Activated naive CD4-positive, alpha-beta T cell treated with anti-CD3 and anti-CD28 coated beads, Interleukin-2, amount 10 ng/mL, durations not matched to agents 7 days and 5 days (primary cell): ENCODE measurements at regions of chr11 and their contacts with region 1.

Region 1: GRCh38 chr11:111454561-111455192 is 57.5 kb downstream of the BTG4 start:
- DNase-seq: peak; percentile 62
- H3K4me3 Mint-ChIP-seq: no peak overlapping the region
- H3K27ac Mint-ChIP-seq: no peak overlapping the region
- H3K4me1 Mint-ChIP-seq: no peaks in the 10 kb centered on the region
- H3K27me3 Mint-ChIP-seq: peaks cover 4% of the 10 kb centered on the region

Region 2: DNA sequence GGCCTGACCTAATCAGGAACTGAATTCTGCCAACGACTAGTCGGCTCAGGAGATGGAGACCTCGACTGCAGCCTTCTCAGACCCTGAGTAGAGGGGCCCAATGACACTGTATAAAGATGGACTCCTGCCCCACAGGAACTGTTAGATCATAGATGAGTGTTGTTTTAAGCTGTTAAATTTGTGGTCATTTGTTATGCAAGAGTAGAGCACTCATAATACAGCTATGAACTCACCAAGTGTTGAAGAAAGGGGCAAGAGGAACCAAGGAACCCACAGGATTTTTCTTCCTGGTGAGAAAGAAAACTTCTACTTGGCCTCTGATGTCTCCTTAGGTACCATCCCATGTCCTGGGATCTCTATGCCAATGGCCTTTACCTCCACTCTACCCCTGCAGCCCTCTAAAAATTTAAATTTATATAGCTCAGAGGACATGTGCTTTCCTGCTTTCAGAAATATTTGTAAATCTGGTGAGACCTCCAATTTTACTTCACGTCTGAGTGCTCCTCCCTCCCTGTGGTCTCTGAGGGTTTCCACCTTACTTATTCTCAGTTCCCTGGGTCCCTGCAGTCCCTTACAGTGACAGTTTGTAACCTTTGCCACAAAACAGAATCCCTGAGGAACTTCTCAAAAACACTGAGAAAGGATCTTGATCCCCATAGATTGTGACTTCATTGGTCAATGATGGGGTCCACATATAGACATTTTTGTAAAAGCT is 486.2 kb before region 1 on chr11:
- CTCF ChIA-PET with region 1: no interaction called
- DNase-seq: no peak
- H3K4me3 Mint-ChIP-seq: no peak overlapping the region
- H3K27ac Mint-ChIP-seq: no peak overlapping the region
- H3K4me1 Mint-ChIP-seq: no peaks in the 10 kb centered on the region
- H3K27me3 Mint-ChIP-seq: no peaks in the 10 kb centered on the region

Region 3: GRCh38 chr11:111367411-111368284 is 87.0 kb before region 1 on chr11:
- CTCF ChIA-PET with region 1: no interaction called
- DNase-seq: no peak
- H3K4me3 Mint-ChIP-seq: no peak overlapping the region
- H3K27ac Mint-ChIP-seq: no peak overlapping the region
- H3K4me1 Mint-ChIP-seq: peaks cover 6% of the 10 kb centered on the region
- H3K27me3 Mint-ChIP-seq: no peaks in the 10 kb centered on the region

Region 4: GRCh38 chr11:111479666-111480065 is 25.0 kb after region 1 on chr11:
- CTCF ChIA-PET with region 1: no interaction called
- DNase-seq: no peak
- H3K4me3 Mint-ChIP-seq: no peak overlapping the region
- H3K27ac Mint-ChIP-seq: no peak overlapping the region
- H3K4me1 Mint-ChIP-seq: peaks cover 4% of the 10 kb centered on the region
- H3K27me3 Mint-ChIP-seq: peaks cover 22% of the 10 kb centered on the region

Region 5: DNA sequence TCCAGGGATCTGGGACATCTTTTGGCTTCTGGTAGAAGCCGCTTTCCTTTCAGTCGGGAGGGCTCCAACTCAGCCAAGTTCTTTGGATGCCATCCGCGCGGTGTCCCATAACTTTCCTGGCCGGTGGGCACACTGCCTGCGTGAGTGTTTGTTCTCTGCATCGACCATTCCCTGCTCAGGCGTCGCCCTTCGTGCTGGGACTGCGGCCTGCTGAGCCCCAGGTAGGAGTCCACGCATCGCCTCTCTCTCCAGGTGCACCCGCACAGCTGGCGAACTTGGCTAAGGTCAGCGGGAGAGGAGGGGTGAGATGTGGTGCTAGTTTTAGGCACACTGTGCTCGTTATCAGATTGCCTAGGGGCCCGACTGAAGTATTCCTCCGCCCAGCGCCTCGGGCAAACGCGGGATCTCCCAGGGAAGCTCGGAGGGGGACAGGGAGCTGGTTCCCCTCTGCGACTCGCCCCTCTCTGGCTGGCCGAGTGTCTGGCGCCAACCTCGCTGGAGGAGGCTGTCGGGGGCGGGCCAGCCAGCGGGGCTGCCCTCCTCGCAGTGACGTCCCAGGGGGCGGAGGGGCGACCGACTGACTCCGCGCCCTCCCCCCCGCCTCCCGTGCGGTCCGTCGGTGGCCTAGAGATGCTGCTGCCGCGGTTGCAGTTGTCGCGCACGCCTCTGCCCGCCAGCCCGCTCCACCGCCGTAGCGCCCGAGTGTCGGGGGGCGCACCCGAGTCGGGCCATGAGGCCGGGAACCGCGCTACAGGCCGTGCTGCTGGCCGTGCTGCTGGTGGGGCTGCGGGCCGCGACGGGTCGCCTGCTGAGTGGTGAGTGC is 85.6 kb after region 1 on chr11 and contains the start of gene LAYN:
- CTCF ChIA-PET with region 1: interaction called, 15 read pairs
- DNase-seq: peak; percentile 46
- H3K4me3 Mint-ChIP-seq: peak within 1 kb of the TSS; percentile 46
- H3K27ac Mint-ChIP-seq: peak within 1 kb of the TSS; percentile 58
- H3K4me1 Mint-ChIP-seq: peaks cover 28% of the 10 kb centered on the region
- H3K27me3 Mint-ChIP-seq: peaks cover 72% of the 10 kb centered on the region